Right cardiac atrium (tissue), 5 donors: ENCODE measurements at regions of chr15 and their contacts with region 1.

Region 1: DNA sequence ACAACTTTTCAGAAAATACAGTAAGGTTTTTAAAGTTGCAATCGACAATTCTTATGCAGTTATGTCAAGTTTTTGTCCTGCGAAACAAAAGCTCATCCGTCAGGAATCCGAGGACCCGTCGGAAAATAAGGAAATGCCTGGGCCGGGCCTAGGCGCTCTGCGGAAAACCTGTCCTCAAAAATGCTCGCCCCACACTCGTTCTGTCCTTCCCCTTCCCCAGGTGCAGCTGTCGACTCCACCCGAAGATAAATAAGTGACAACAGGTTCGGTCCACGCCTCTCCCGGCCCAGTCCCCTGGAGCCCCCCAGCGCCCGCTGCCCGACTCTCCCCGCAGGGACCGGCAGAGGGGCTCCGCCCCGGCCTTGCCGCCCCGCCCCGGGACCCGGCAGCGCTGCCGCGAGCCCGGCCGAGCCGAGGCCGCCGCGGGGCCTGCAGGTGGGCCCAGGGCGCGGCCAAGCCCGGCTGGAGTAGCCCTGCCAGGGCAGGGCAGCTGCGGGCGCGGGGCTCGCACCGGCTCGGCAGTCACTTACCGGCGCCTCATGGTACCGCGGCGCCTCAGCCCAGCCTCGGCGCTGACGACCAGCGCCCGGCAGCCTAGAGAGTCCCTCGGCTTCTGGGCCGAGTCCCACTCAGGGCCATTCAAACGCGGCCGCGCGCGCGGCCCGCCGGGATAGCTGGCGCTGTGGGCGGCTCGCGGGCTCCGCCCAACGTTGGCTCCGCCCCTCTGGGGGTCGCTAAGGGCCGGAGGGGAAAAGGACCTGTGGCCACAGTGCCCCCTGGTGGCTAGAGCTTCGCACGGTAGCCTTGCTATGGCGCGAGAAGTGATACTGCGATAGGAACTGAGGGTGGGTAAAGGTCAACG is at the start of gene KATNBL1:
- DNase-seq: peak; percentile 98 to 99 (median 99)
- ATAC-seq: peak; percentile 100
- H3K4me3 ChIP-seq: peak within 1 kb of the TSS; percentile 88
- H3K27ac ChIP-seq: peak within 1 kb of the TSS; percentile 90
- H3K4me1 ChIP-seq: peaks cover 3% of the 10 kb centered on the region
- H3K27me3 ChIP-seq: no peaks in the 10 kb centered on the region
- total RNA-seq, gene KATNBL1: 18.3 to 26.1 (median 21.5) TPM

Region 2: GRCh38 chr15:34056936-34057335 is 152.7 kb before region 1 on chr15:
- intact Hi-C with region 1: loop called in 3 of 4 experiments (anchors 2 to 5 kb)
- DNase-seq: no peak
- ATAC-seq: no peak
- H3K4me3 ChIP-seq: no peak overlapping the region
- H3K27ac ChIP-seq: no peak overlapping the region
- H3K4me1 ChIP-seq: no peaks in the 10 kb centered on the region
- H3K27me3 ChIP-seq: no peaks in the 10 kb centered on the region

Region 3: GRCh38 chr15:34065941-34066340 is 143.7 kb before region 1 on chr15:
- intact Hi-C with region 1: loop called (anchors 2 to 5 kb)
- DNase-seq: no peak
- ATAC-seq: no peak
- H3K4me3 ChIP-seq: no peak overlapping the region
- H3K27ac ChIP-seq: no peak overlapping the region
- H3K4me1 ChIP-seq: no peaks in the 10 kb centered on the region
- H3K27me3 ChIP-seq: no peaks in the 10 kb centered on the region

Region 4: DNA sequence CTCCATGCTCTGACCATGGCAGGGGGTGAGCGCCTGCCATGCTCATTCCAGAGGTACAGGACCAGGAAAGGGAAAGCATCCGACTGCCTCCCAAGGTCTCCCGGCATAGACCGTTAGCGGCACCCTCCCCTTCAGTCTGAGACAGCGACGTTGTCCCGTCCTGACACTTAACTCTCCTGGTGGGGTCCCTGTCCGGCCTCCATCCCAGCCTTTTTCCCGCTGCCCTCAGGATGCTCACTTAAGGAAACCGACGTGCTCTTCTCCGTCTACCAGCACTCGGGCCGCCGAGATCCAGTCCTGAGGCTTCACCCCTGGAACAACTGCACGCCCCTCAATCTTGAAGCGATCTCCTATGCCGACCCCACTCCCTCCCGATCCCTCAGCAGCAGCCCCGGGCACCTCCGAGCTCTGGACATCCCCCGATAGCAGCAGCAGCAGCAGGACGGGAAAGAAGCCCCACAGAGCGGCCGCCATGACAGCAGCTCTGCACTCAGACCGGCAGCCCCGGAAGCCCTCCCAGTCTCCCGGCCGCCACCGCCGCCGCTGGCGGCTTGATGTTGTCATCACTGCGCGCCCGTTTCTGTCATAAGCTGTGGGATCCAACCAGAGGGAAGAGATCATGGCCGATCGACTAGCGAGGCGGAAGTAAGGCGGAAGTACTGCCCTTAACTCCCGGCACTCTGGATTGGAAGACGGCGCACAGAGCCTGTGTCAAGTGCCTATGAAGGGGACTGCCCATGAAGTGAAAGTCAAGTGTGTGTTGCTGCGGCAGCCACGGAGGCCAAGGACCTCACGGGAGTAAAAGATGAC is 108.1 kb before region 1 on chr15 and contains the starts of genes EMC7 and PGBD4:
- intact Hi-C with region 1: loop called in 1 of 4 experiments (anchors 5 kb)
- DNase-seq: peak; percentile 99
- ATAC-seq: peak; percentile 100
- H3K4me3 ChIP-seq: peak within 1 kb of the TSS; percentile 93
- H3K27ac ChIP-seq: peak within 1 kb of the TSS; percentile 94
- H3K4me1 ChIP-seq: peaks cover 4% of the 10 kb centered on the region
- H3K27me3 ChIP-seq: no peaks in the 10 kb centered on the region
- total RNA-seq, gene EMC7: 66.0 to 90.0 (median 72.8) TPM
- total RNA-seq, gene PGBD4: 2.2 to 2.9 (median 2.7) TPM